ENCODE measurements at regions of chr1 and their contacts with region 1.

Region 1: GRCh38 chr1:31065310-31066217 is at the start of gene PUM1:
- DNase-seq: peak; percentile 99
- H3K4me3 Mint-ChIP-seq: peak within 1 kb of the TSS; percentile 94
- H3K27ac Mint-ChIP-seq: peak within 1 kb of the TSS; percentile 100
- H3K4me1 Mint-ChIP-seq: peaks cover 12% of the 10 kb centered on the region
- H3K27me3 Mint-ChIP-seq: no peaks in the 10 kb centered on the region
- CTCF ChIP-seq: no peak
- total RNA-seq, gene PUM1: 107 and 110 TPM in 2 replicates

Region 2: DNA sequence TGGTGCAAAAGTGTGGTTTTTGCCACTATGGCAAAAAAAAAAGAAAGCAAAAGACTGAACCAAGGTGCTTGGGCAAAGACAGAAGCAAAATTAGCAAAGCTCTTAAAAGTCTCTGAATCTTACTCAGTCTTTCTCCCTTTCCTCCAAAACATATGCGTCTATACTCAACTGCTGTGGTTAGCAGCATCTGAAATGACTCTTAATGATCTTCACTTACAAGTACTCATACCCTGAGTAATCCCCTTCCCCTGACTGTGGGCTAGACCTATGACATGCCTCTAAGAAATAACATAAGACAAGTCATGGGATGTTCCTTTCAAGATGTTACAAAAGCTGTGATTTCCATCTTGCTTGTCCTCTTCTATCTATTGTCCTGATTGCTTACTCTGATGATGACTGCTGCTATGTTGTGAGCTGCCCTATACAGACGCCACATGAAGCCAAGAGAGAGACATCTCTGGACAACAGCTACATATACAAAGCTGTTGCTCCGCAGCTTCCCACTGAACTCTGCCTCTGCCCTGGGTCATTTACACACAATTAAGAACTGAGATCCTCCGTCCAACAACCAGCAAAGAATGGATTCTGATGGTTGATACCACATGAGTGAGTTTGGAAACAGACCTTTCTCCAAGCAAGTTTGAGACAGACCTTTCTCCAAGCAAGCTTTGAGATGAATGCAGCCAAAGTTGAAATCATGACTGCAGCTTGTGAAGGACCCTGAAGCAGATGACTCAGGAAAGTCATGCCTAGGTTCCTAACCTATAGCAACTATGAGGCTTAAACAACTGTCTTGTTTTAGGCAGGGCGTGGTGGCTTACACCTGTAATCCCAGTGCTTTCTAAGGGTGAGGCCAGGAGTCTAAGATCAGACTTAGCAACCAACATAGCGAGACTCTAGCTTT is 55.2 kb before region 1 on chr1:
- CTCF ChIA-PET with region 1: no interaction called
- POLR2A ChIA-PET with region 1: interaction called, 17 read pairs
- intact Hi-C with region 1: no loop called
- DNase-seq: peak; percentile 23
- H3K4me3 Mint-ChIP-seq: no peak overlapping the region
- H3K27ac Mint-ChIP-seq: no peak overlapping the region
- H3K4me1 Mint-ChIP-seq: peaks cover 60% of the 10 kb centered on the region
- H3K27me3 Mint-ChIP-seq: no peaks in the 10 kb centered on the region
- CTCF ChIP-seq: no peak

Region 3: DNA sequence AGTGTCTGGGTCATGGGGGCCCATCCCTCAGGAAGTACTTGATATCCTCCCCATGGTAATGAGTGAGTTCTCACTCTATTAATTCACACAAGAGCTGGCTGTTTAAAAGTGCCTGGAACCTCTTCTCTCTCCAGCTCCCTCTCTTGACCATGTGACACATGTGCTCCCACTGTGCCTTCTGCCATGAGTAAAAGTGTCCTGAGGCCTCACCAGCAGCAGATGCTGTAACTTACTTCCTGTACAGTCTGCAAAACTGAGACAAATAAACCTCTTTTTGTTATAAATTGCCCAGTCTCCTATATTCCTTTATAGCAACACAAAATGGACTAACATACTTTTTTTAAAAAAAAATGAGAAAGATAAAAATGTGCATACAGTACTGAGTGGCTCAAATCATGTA is 24.0 kb before region 1 on chr1:
- CTCF ChIA-PET with region 1: no interaction called
- POLR2A ChIA-PET with region 1: interaction called, 15 read pairs
- intact Hi-C with region 1: no loop called
- DNase-seq: no peak
- H3K4me3 Mint-ChIP-seq: no peak overlapping the region
- H3K27ac Mint-ChIP-seq: no peak overlapping the region
- H3K4me1 Mint-ChIP-seq: peaks cover 32% of the 10 kb centered on the region
- H3K27me3 Mint-ChIP-seq: no peaks in the 10 kb centered on the region
- CTCF ChIP-seq: no peak

Region 4: DNA sequence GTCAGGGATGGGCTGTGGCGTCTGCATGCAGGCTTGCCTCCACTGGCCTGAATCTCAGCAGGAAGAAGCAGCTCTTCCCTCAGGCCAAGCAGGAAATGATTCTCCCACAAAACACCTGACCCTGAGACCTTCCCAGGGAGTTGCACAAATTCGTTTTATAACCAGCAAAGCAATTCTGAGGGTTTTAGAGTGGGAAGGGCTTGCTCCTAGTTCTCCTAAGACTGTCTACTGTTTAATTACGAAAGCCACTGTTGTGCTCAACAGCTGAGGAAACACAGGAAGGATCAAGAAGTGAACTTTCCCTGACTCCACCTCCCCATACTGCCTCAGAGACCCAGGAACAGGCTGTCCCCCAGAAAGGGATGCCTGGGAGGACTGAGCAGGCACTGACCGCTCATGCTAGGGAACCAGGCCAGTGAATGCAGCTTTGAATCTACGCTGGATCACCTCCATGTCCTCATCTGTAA is 37.0 kb after region 1 on chr1:
- CTCF ChIA-PET with region 1: no interaction called
- POLR2A ChIA-PET with region 1: interaction called, 13 read pairs
- intact Hi-C with region 1: no loop called
- DNase-seq: peak; percentile 94
- H3K4me3 Mint-ChIP-seq: peak overlapping the region; percentile 25
- H3K27ac Mint-ChIP-seq: peak overlapping the region; percentile 54
- H3K4me1 Mint-ChIP-seq: peaks cover 11% of the 10 kb centered on the region
- H3K27me3 Mint-ChIP-seq: no peaks in the 10 kb centered on the region
- CTCF ChIP-seq: no peak

Region 5: DNA sequence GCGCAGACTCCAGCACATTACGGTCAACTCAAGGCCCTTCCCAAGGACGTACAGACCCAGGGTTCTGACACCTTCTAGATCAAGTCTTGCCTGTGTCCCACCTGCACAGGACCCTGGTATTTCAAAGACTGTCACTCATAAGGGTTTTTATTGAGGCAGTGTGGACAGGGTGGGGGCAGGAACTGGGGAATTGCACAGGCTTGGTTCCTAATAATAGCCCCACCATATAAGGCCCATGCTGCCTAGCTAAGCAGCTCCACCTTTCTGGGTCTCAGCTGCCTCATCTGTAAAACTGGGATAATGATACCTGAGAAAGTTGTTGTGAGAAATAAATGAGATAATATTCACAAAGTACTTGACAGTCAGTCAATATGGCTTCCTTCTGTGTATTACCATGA is 55.2 kb after region 1 on chr1:
- CTCF ChIA-PET with region 1: interaction called, 3 read pairs
- POLR2A ChIA-PET with region 1: interaction called, 10 read pairs
- intact Hi-C with region 1: no loop called
- DNase-seq: no peak
- H3K4me3 Mint-ChIP-seq: no peak overlapping the region
- H3K27ac Mint-ChIP-seq: no peak overlapping the region
- H3K4me1 Mint-ChIP-seq: peaks cover 11% of the 10 kb centered on the region
- H3K27me3 Mint-ChIP-seq: no peaks in the 10 kb centered on the region
- CTCF ChIP-seq: no peak

Region 6: GRCh38 chr1:31155216-31155841 is 89.8 kb after region 1 on chr1:
- CTCF ChIA-PET with region 1: interaction called, 5 read pairs
- POLR2A ChIA-PET with region 1: interaction called, 30 read pairs
- intact Hi-C with region 1: loop called (anchors 1 kb)
- DNase-seq: peak; percentile 72
- H3K4me3 Mint-ChIP-seq: peak overlapping the region; percentile 82
- H3K27ac Mint-ChIP-seq: peak overlapping the region; percentile 95
- H3K4me1 Mint-ChIP-seq: peaks cover 20% of the 10 kb centered on the region
- H3K27me3 Mint-ChIP-seq: no peaks in the 10 kb centered on the region
- CTCF ChIP-seq: peak; percentile 36

Region 7: GRCh38 chr1:31166462-31166861 is 100.9 kb after region 1 on chr1:
- CTCF ChIA-PET with region 1: interaction called, 4 read pairs
- POLR2A ChIA-PET with region 1: interaction called, 13 read pairs
- intact Hi-C with region 1: no loop called
- DNase-seq: no peak
- H3K4me3 Mint-ChIP-seq: no peak overlapping the region
- H3K27ac Mint-ChIP-seq: no peak overlapping the region
- H3K4me1 Mint-ChIP-seq: peaks cover 14% of the 10 kb centered on the region
- H3K27me3 Mint-ChIP-seq: no peaks in the 10 kb centered on the region
- CTCF ChIP-seq: no peak

Region 8: GRCh38 chr1:31354283-31354682 is 288.7 kb after region 1 on chr1:
- CTCF ChIA-PET with region 1: no interaction called
- POLR2A ChIA-PET with region 1: no interaction called
- intact Hi-C with region 1: no loop called
- DNase-seq: no peak
- H3K4me3 Mint-ChIP-seq: no peak overlapping the region
- H3K27ac Mint-ChIP-seq: no peak overlapping the region
- H3K4me1 Mint-ChIP-seq: no peaks in the 10 kb centered on the region
- H3K27me3 Mint-ChIP-seq: no peaks in the 10 kb centered on the region
- CTCF ChIP-seq: no peak

Region 9: GRCh38 chr1:31460027-31460426 is 394.5 kb after region 1 on chr1:
- CTCF ChIA-PET with region 1: no interaction called
- POLR2A ChIA-PET with region 1: no interaction called
- intact Hi-C with region 1: no loop called
- DNase-seq: no peak
- H3K4me3 Mint-ChIP-seq: no peak overlapping the region
- H3K27ac Mint-ChIP-seq: no peak overlapping the region
- H3K4me1 Mint-ChIP-seq: no peaks in the 10 kb centered on the region
- H3K27me3 Mint-ChIP-seq: peaks cover 20% of the 10 kb centered on the region
- CTCF ChIP-seq: peak; percentile 45

Measured in MCF 10A (cell line).